Activated CD4-positive, alpha-beta T cell treated with anti-CD3 and anti-CD28 coated beads for 36 hours (primary cell): ENCODE measurements at regions of chr17 and their contacts with region 1.

Region 1: GRCh38 chr17:1716076-1716995 is 6.2 kb upstream of the TLCD2 start:
- DNase-seq: peak; percentile 100
- ATAC-seq: peak; percentile 89
- H3K4me3 Mint-ChIP-seq: peak overlapping the region; percentile 86
- H3K27ac Mint-ChIP-seq: peak overlapping the region; percentile 97
- H3K4me1 Mint-ChIP-seq: peaks cover 23% of the 10 kb centered on the region
- H3K27me3 Mint-ChIP-seq: peaks cover 4% of the 10 kb centered on the region

Region 2: DNA sequence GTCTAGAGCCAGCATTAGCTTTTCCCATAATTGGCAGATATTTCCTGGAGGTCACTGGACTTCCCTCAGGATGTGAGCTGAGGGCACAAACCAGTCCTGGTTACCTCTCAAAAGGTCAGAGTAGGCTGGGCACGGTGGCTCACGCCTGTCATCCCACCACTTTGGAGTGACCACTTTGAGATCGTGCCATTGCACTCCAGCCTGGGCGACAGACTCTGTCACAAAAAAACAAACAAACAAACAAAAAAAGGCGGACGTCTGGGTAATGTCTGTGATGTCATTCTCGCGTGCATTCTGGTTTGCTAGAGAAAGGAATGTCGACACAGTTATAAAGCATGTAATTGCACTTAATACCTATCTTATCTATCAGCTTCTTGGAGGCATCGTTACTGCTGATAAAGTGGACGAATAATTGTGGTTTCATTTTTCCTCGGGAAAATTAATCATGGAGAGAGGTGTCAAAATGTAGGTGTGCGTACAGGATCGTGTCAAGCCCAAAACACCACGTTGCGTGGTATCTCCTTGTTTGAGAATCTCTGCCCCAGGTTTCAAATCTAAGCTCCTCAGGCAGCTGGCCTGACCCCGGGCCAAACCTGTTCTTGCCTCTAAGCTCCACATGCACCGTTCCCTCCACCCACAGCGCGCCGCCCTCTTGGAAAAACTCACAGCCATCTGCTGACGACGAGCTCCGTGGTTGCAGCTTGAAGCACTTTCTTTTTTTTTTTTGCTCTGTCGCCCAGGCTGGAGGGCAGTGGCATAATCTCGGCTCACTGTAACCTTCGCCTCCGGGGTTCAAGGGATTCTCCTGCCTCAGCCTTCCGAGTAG is 253.8 kb before region 1 on chr17:
- CTCF ChIA-PET with region 1: interaction called, 5 read pairs
- POLR2A ChIA-PET with region 1: no interaction called
- intact Hi-C with region 1: loop called in 1 of 2 experiments (anchors 1 kb)
- DNase-seq: peak; percentile 32
- ATAC-seq: no peak
- H3K4me3 Mint-ChIP-seq: peak overlapping the region; percentile 37
- H3K27ac Mint-ChIP-seq: no peak overlapping the region
- H3K4me1 Mint-ChIP-seq: peaks cover 38% of the 10 kb centered on the region
- H3K27me3 Mint-ChIP-seq: peaks cover 16% of the 10 kb centered on the region

Region 3: DNA sequence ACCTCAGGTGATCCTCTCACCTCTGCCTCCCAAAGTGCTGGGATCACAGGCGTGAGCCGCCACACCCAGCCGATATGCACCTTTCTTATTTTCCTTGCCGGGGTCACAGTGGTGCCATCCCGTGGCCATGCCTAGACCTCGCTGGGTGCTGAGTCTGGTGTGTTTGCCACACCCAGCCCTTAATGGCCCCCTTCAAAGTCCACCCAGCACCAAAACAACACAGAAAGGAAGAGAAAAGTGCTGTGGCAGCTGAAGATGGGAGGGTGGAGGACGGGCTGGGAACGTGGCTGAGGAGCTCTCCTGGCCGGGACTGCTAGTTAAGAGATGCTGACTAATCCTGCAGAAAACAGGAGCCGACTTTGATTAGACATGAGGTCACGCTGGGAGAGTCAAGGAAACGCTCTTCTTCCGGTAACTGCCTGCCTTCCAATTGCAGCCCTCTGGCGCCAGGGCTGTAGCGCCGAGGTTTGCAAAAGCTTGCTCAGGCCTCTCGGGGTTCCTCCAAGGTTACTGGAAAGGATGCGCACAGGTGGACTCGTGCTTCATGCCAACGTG is 98.6 kb before region 1 on chr17:
- CTCF ChIA-PET with region 1: no interaction called
- POLR2A ChIA-PET with region 1: no interaction called
- intact Hi-C with region 1: no loop called
- DNase-seq: no peak
- ATAC-seq: no peak
- H3K4me3 Mint-ChIP-seq: no peak overlapping the region
- H3K27ac Mint-ChIP-seq: no peak overlapping the region
- H3K4me1 Mint-ChIP-seq: no peaks in the 10 kb centered on the region
- H3K27me3 Mint-ChIP-seq: no peaks in the 10 kb centered on the region

Region 4: DNA sequence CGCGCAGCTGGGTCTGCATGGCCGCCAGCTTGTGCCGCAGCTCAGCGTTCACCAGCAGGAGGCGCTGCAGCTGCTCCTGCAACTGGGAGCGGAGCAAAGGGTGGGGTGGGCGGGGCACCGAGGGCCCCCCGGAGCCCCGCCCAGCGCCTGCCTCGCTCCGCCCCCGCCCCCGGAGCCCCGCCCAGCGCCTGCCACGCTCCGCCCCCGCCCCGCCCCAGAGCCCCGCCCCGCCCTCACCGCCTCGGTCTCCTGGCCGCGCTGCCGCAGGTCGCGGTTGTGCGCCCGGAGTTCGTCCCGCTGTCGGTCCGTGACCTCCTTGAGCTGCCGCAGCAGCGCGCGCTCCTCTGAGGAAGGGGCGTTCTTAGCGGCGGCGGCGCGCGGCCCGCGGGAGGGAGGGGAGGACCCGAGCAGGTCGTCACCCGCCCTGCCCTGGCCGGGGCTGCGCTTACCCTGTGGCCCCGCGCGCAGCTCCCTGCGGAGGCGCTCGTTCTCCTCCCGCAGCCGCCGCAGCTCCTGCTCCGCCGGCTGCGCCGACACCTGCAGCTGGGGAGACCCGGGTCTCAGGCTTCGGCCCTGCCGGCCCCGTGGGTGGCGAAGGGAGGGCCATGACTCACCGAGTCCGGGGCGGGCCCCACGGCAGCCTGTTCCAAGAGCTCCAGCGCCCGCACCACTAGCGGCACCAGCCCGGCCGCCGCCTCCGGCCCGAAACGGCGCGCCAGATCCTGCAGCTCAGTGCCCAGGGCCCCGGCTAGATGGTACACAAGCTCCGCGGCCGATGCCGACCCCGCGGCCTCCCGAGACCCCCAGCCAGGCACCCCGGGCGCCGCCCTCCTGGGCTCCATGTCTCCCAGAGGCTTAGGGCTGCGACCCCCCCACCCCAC is 67.1 kb before region 1 on chr17:
- CTCF ChIA-PET with region 1: interaction called, 6 read pairs
- POLR2A ChIA-PET with region 1: interaction called, 6 read pairs
- intact Hi-C with region 1: loop called (anchors 1 kb)
- DNase-seq: peak; percentile 97
- ATAC-seq: peak; percentile 74
- H3K4me3 Mint-ChIP-seq: peak overlapping the region; percentile 43
- H3K27ac Mint-ChIP-seq: no peak overlapping the region
- H3K4me1 Mint-ChIP-seq: peaks cover 25% of the 10 kb centered on the region
- H3K27me3 Mint-ChIP-seq: no peaks in the 10 kb centered on the region

Region 5: DNA sequence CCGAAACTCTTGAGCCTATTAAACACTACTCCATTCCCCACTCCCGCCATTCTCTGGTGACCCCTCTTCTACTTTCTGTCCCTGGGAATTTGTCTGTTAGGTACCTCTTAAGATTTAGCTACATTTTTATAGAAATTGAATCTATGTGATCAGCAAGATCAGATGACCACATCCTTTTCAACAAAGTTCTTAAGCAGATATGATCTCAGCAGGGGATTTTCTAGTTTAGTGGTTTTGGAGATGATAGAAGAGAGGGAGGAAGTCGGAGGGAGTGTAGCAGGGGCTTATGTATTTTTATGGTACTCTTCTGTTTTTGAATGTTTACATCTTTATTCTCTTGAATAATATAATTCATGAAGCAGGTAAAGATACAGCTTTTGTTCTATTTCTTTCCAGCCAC is 154.3 kb after region 1 on chr17:
- CTCF ChIA-PET with region 1: interaction called, 6 read pairs
- POLR2A ChIA-PET with region 1: no interaction called
- intact Hi-C with region 1: loop called (anchors 1 to 5 kb)
- DNase-seq: no peak
- ATAC-seq: peak; percentile 68
- H3K4me3 Mint-ChIP-seq: peak overlapping the region; percentile 42
- H3K27ac Mint-ChIP-seq: peak overlapping the region; percentile 97
- H3K4me1 Mint-ChIP-seq: peaks cover 55% of the 10 kb centered on the region
- H3K27me3 Mint-ChIP-seq: no peaks in the 10 kb centered on the region

Region 6: GRCh38 chr17:2266045-2266864 is 549.9 kb after region 1 on chr17:
- CTCF ChIA-PET with region 1: no interaction called
- POLR2A ChIA-PET with region 1: interaction called, 3 read pairs
- intact Hi-C with region 1: loop called in 1 of 2 experiments (anchors 5 kb)
- DNase-seq: peak; percentile 93
- ATAC-seq: peak; percentile 76
- H3K4me3 Mint-ChIP-seq: peak overlapping the region; percentile 72
- H3K27ac Mint-ChIP-seq: peak overlapping the region; percentile 98
- H3K4me1 Mint-ChIP-seq: peaks cover 86% of the 10 kb centered on the region
- H3K27me3 Mint-ChIP-seq: no peaks in the 10 kb centered on the region

Region 7: GRCh38 chr17:2401426-2402221 is 685.3 kb after region 1 on chr17:
- CTCF ChIA-PET with region 1: no interaction called
- POLR2A ChIA-PET with region 1: no interaction called
- intact Hi-C with region 1: loop called in 1 of 2 experiments (anchors 1 kb)
- DNase-seq: peak; percentile 100
- ATAC-seq: peak; percentile 59
- H3K4me3 Mint-ChIP-seq: peak overlapping the region; percentile 88
- H3K27ac Mint-ChIP-seq: peak overlapping the region; percentile 99
- H3K4me1 Mint-ChIP-seq: peaks cover 43% of the 10 kb centered on the region
- H3K27me3 Mint-ChIP-seq: no peaks in the 10 kb centered on the region